Astrocyte of the cerebellum (primary cell): ENCODE measurements at regions of chr3 and their contacts with region 1.

Region 1: DNA sequence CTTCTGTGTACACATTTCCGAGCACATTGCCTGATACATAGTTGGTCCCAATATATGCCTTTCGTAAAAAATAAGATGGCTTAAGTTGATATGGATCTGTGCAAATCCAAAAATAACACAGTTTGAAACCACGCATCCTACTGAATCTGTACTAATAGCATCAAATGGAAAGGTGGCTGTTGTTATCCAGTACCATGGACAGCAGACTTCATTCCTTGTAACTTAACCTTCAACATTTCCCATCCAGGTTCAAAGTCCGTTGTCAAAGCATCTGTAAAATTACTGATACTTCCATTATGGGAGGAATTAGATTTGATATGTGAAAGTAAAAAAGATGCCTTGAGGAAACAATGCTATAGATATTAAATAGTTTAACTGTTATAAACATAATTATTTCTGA is 65.5 kb upstream of the C3orf49 start:
- DNase-seq: peak; percentile 28
- H3K4me3 ChIP-seq: no peak overlapping the region
- CTCF ChIP-seq: no peak

Region 2: GRCh38 chr3:63687278-63688225 is 66.0 kb before region 1 on chr3:
- in situ Hi-C with region 1: loop called (anchors 5 kb)
- DNase-seq: no peak
- H3K4me3 ChIP-seq: no peak overlapping the region
- CTCF ChIP-seq: no peak

Region 3: DNA sequence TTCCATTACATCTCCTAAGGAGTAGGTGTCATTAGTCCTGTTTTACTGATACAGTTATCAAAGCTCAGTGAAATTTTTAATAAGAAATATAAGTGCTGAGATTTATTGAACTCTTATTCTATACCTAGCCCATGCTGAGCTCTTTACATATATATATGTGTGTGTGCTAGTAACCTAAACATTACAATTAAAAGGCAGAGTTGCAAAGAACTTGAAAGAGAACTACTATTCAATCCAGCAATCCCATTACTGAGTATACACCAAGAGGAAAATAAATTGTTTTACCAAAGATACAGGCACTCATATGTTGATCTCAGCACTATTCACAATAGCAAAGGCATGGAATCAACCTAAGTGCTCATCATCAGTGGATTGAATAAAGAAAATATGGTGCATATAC is 53.1 kb before region 1 on chr3:
- in situ Hi-C with region 1: no loop called
- DNase-seq: no peak
- H3K4me3 ChIP-seq: no peak overlapping the region
- CTCF ChIP-seq: no peak

Region 4: DNA sequence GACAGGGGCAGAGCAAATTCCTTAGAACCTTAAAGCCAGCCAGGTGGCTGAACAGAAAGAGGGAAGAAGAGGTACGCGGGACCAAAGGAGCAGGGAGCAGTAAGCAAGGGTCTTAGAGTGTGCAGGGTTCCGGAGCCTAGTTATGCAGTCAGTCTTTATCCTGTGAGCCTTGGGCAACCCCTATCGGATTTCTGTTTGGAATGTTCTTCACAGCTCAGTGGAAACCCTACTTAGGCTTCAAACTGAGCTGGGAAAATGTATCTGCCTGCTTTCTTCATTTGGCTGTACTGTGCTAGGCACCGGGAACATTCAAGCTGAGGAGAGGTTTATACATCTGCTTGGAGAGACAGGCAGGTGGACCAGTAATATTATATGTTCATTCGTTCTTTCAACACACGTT is 232.6 kb after region 1 on chr3:
- in situ Hi-C with region 1: no loop called
- DNase-seq: no peak
- H3K4me3 ChIP-seq: no peak overlapping the region
- CTCF ChIP-seq: no peak